AG04449 (cell line): ENCODE measurements at regions of chrX and their contacts with region 1.

Region 1: GRCh38 chrX:50204364-50204899 is at the start of gene CCNB3:
- DNase-seq: no peak
- H3K4me3 ChIP-seq: peak within 1 kb of the TSS; percentile 37
- CTCF ChIP-seq: peak; percentile 48

Region 2: GRCh38 chrX:49915361-49916222 is 288.8 kb before region 1 on chrX:
- CTCF ChIA-PET with region 1: interaction called, 18 read pairs
- POLR2A ChIA-PET with region 1: interaction called, 3 read pairs
- DNase-seq: no peak
- H3K4me3 ChIP-seq: no peak overlapping the region
- CTCF ChIP-seq: peak; percentile 74